Activated CD8-positive, alpha-beta memory T cell treated with anti-CD3 and anti-CD28 coated beads, Interleukin-2, amount 10 ng/mL, durations not matched to agents 7 days and 5 days (primary cell): ENCODE measurements at regions of chr1 and their contacts with region 1.

Region 1: GRCh38 chr1:26358411-26359384 is 4.8 kb upstream of the CRYBG2 start:
- DNase-seq: peak; percentile 93
- ATAC-seq: peak; percentile 89
- H3K4me3 Mint-ChIP-seq: peak overlapping the region; percentile 48
- H3K27ac Mint-ChIP-seq: peak overlapping the region; percentile 66
- H3K4me1 Mint-ChIP-seq: peaks cover 51% of the 10 kb centered on the region
- H3K27me3 Mint-ChIP-seq: peaks cover 13% of the 10 kb centered on the region

Region 2: GRCh38 chr1:26345718-26346549 is 12.8 kb before region 1 on chr1:
- CTCF ChIA-PET with region 1: interaction called, 19 read pairs
- DNase-seq: no peak
- ATAC-seq: no peak
- H3K4me3 Mint-ChIP-seq: no peak overlapping the region
- H3K27ac Mint-ChIP-seq: no peak overlapping the region
- H3K4me1 Mint-ChIP-seq: no peaks in the 10 kb centered on the region
- H3K27me3 Mint-ChIP-seq: peaks cover 6% of the 10 kb centered on the region

Region 3: GRCh38 chr1:26372039-26372438 is 13.3 kb after region 1 on chr1:
- CTCF ChIA-PET with region 1: interaction called, 142 read pairs
- DNase-seq: no peak
- ATAC-seq: no peak
- H3K4me3 Mint-ChIP-seq: no peak overlapping the region
- H3K27ac Mint-ChIP-seq: peak overlapping the region; percentile 82
- H3K4me1 Mint-ChIP-seq: peaks cover 74% of the 10 kb centered on the region
- H3K27me3 Mint-ChIP-seq: no peaks in the 10 kb centered on the region

Region 4: GRCh38 chr1:26459573-26460031 is 100.9 kb after region 1 on chr1:
- CTCF ChIA-PET with region 1: no interaction called
- DNase-seq: no peak
- ATAC-seq: no peak
- H3K4me3 Mint-ChIP-seq: no peak overlapping the region
- H3K27ac Mint-ChIP-seq: no peak overlapping the region
- H3K4me1 Mint-ChIP-seq: no peaks in the 10 kb centered on the region
- H3K27me3 Mint-ChIP-seq: no peaks in the 10 kb centered on the region